Ovary (tissue), 10 donors: ENCODE measurements at regions of chr10 and their contacts with region 1.

Region 1: GRCh38 chr10:36450380-36450779 is 675.0 kb upstream of the ANKRD30A start:
- DNase-seq: peak in 1 of 5 donors; percentile 17
- H3K4me3 ChIP-seq: no peak overlapping the region
- H3K27ac ChIP-seq: no peak overlapping the region
- H3K4me1 ChIP-seq: peaks cover 5% of the 10 kb centered on the region
- H3K27me3 ChIP-seq: no peaks in the 10 kb centered on the region
- CTCF ChIP-seq: no peak
- EP300 ChIP-seq: no peak
- POLR2A ChIP-seq: no peak

Region 2: GRCh38 chr10:36280321-36280741 is 170.0 kb before region 1 on chr10:
- intact Hi-C with region 1: loop called in 1 of 4 experiments (anchors 10 kb)
- DNase-seq: no peak
- H3K4me3 ChIP-seq: no peak overlapping the region
- H3K27ac ChIP-seq: no peak overlapping the region
- H3K4me1 ChIP-seq: no peaks in the 10 kb centered on the region
- H3K27me3 ChIP-seq: no peaks in the 10 kb centered on the region
- CTCF ChIP-seq: no peak
- EP300 ChIP-seq: no peak
- POLR2A ChIP-seq: no peak

Region 3: GRCh38 chr10:36469585-36469984 is 19.2 kb after region 1 on chr10:
- intact Hi-C with region 1: no loop called
- DNase-seq: no peak
- H3K4me3 ChIP-seq: no peak overlapping the region
- H3K27ac ChIP-seq: no peak overlapping the region
- H3K4me1 ChIP-seq: no peaks in the 10 kb centered on the region
- H3K27me3 ChIP-seq: no peaks in the 10 kb centered on the region
- CTCF ChIP-seq: no peak
- EP300 ChIP-seq: no peak
- POLR2A ChIP-seq: no peak